ENCODE measurements at regions of chr10 and their contacts with region 1.

Region 1: GRCh38 chr10:47047671-47048525 is 136.7 kb downstream of the PTPN20 start:
- DNase-seq: peak; percentile 86
- ATAC-seq: peak; percentile 77
- H3K4me3 Mint-ChIP-seq: no peak overlapping the region
- H3K27ac Mint-ChIP-seq: peak overlapping the region; percentile 32; the same call in 1 of the 2 replicates
- H3K4me1 Mint-ChIP-seq: no peaks in the 10 kb centered on the region
- H3K27me3 Mint-ChIP-seq: no peaks in the 10 kb centered on the region; the same call in 1 of the 2 replicates
- CTCF ChIP-seq: peak; percentile 96

Region 2: DNA sequence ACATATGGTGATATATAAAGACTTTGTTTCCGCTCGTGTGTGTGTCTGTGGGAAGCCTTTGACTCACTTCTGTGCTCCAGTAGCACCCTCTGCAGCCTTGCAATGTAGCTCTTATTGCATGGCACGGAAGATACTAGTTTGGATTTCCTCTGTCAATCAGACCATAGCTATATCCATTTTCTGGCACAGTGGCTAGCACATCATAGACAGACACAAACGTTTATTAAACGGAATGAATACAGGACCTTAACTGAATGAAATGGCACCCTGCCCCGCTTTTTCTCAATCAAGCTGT is 260.6 kb before region 1 on chr10:
- CTCF ChIA-PET with region 1: no interaction called
- POLR2A ChIA-PET with region 1: no interaction called
- DNase-seq: no peak
- ATAC-seq: no peak
- H3K4me3 Mint-ChIP-seq: peak overlapping the region; percentile 100
- H3K27ac Mint-ChIP-seq: no peak overlapping the region; the same call in 1 of the 2 replicates
- H3K4me1 Mint-ChIP-seq: no peaks in the 10 kb centered on the region
- H3K27me3 Mint-ChIP-seq: no peaks in the 10 kb centered on the region
- CTCF ChIP-seq: no peak

Region 3: DNA sequence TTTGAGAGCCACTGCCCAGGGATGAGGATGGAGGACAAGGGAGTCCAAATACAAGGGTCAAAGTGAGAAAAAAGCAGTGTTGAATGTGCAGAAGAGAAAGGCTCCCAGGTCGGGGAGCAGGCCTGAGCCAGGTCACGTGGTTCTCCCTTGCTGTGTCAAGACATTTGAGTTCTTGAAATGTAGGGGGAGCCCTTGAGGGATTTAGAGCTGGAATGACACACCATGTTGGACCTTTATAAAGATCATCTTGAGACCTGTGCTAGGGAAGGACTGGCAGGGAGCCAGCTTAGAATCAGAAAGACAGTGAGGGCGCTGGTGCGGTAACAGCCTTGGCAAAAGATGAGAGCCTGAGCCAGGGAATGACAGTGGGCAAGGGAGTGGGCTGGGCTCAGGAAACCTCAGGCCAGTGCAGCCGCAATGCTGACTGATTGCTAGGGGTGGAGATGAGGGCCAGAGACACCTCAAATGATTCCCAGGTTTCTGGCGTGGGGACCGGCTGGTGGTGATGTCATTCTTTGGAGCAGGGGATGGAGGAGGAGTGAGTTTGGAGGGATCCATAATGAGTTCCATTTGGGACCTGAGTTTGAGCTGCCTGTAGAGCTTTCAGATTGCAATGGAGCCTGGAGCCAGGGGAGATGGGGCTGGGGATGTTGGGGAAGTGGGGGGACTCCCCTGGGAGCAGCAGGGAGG is 16.5 kb before region 1 on chr10:
- CTCF ChIA-PET with region 1: interaction called, 27 read pairs
- POLR2A ChIA-PET with region 1: no interaction called
- DNase-seq: peak; percentile 14
- ATAC-seq: peak; percentile 80
- H3K4me3 Mint-ChIP-seq: no peak overlapping the region
- H3K27ac Mint-ChIP-seq: no peak overlapping the region
- H3K4me1 Mint-ChIP-seq: no peaks in the 10 kb centered on the region
- H3K27me3 Mint-ChIP-seq: no peaks in the 10 kb centered on the region
- CTCF ChIP-seq: no peak

Region 4: GRCh38 chr10:47189802-47190700 is 142.2 kb after region 1 on chr10:
- CTCF ChIA-PET with region 1: interaction called, 11 read pairs
- POLR2A ChIA-PET with region 1: no interaction called
- DNase-seq: no peak
- ATAC-seq: no peak
- H3K4me3 Mint-ChIP-seq: no peak overlapping the region
- H3K27ac Mint-ChIP-seq: no peak overlapping the region
- H3K4me1 Mint-ChIP-seq: no peaks in the 10 kb centered on the region
- H3K27me3 Mint-ChIP-seq: no peaks in the 10 kb centered on the region
- CTCF ChIP-seq: no peak

Region 5: GRCh38 chr10:47269294-47269693 is 221.4 kb after region 1 on chr10:
- CTCF ChIA-PET with region 1: interaction called, 23 read pairs
- POLR2A ChIA-PET with region 1: interaction called, 3 read pairs
- DNase-seq: no peak
- ATAC-seq: peak; percentile 39; the same call in 1 of the 2 replicates
- H3K4me3 Mint-ChIP-seq: no peak overlapping the region
- H3K27ac Mint-ChIP-seq: no peak overlapping the region
- H3K4me1 Mint-ChIP-seq: peaks cover 4% of the 10 kb centered on the region; the same call in 1 of the 2 replicates
- H3K27me3 Mint-ChIP-seq: no peaks in the 10 kb centered on the region
- CTCF ChIP-seq: no peak

Region 6: DNA sequence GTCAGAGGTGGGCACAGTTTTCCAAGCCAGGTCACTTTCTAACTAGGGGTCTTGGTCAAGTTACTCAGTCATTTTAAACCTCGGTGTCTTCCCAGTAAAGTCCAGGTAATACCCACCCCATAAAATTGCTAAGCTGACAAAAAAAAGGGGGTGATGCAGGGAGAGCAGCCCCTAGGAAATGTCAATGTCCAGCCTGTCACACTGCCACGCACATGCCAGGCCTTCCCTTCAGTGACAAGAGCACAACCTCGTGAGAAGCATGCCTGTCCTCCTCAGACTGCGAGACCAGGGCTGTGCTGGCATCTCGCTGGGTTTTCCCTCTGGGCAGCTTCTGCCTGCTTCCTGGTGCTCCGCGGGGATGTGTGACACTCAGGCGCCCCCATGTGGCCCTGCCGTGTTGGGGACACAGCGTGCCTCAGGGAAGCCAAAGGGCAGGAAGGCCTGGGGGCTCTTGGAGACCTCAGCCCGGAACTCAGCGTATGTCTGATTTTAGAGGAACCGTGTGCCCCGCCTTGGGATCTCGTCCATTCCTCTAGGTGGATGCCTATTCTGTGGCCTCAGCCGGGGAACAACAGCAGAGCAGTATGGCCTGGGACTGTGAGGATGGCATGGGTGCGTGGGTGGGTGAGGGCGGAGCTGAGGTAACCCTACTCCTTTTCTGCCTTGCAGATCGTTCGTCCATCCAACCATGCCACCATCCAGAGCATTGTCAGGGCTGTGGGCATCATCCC is 264.2 kb after region 1 on chr10:
- CTCF ChIA-PET with region 1: interaction called, 69 read pairs
- POLR2A ChIA-PET with region 1: no interaction called
- DNase-seq: peak; percentile 89
- ATAC-seq: peak; percentile 87
- H3K4me3 Mint-ChIP-seq: no peak overlapping the region
- H3K27ac Mint-ChIP-seq: no peak overlapping the region
- H3K4me1 Mint-ChIP-seq: peaks cover 25% of the 10 kb centered on the region
- H3K27me3 Mint-ChIP-seq: no peaks in the 10 kb centered on the region
- CTCF ChIP-seq: peak; percentile 62; the same call in 1 of the 2 replicates